ENCODE measurements at regions of chr12 and their contacts with region 1.

Region 1: DNA sequence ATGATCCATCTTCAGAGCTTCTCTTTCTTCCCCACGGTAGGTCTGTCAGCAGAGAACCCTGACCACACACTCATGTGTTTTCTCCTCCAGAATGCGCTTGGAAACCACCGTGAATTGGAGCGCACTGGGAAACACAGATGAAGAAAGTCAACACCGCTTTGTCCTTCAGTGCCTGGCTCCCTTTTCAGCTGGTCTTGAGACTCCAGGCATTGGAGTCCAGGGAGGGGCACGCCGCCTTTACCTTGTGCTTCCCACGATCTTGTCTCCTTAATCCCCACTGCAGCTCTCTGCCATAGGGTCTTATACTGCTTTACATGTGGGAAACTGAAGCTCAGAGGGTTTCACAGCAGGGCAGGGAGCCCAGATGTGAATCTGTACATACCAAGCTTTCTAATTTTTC is 1.1 kb downstream of the FAM90A1 start:
- DNase-seq: no peak
- ATAC-seq: no peak
- H3K4me3 ChIP-seq: no peak overlapping the region
- H3K4me3 Mint-ChIP-seq: no peak overlapping the region
- H3K27ac ChIP-seq: no peak overlapping the region
- H3K27ac Mint-ChIP-seq: no peak overlapping the region
- H3K4me1 ChIP-seq: no peaks in the 10 kb centered on the region
- H3K4me1 Mint-ChIP-seq: peaks cover 0 to 14% (median 0%) of the 10 kb centered on the region in 7 donors
- H3K27me3 ChIP-seq: no peaks in the 10 kb centered on the region
- H3K27me3 Mint-ChIP-seq: peaks cover 0 to 7% (median 5%) of the 10 kb centered on the region in 5 donors

Region 2: GRCh38 chr12:7832059-7832696 is 394.2 kb before region 1 on chr12:
- CTCF ChIA-PET with region 1: no interaction called
- POLR2A ChIA-PET with region 1: no interaction called
- intact Hi-C with region 1: loop called in 1 of 2 experiments (anchors 10 kb)
- DNase-seq: peak in 5 of 9 donors; percentile 8 to 34 (median 19)
- ATAC-seq: peak; percentile 91
- H3K4me3 ChIP-seq: no peak overlapping the region
- H3K4me3 Mint-ChIP-seq: no peak overlapping the region
- H3K27ac ChIP-seq: no peak overlapping the region
- H3K27ac Mint-ChIP-seq: no peak overlapping the region
- H3K4me1 ChIP-seq: no peaks in the 10 kb centered on the region
- H3K4me1 Mint-ChIP-seq: peaks cover 0 to 3% (median 0%) of the 10 kb centered on the region in 7 donors
- H3K27me3 ChIP-seq: no peaks in the 10 kb centered on the region
- H3K27me3 Mint-ChIP-seq: peaks cover 0 to 9% (median 0%) of the 10 kb centered on the region in 5 donors

Region 3: GRCh38 chr12:8081251-8081920 is 145.0 kb before region 1 on chr12:
- CTCF ChIA-PET with region 1: no interaction called
- POLR2A ChIA-PET with region 1: no interaction called
- intact Hi-C with region 1: no loop called
- DNase-seq: peak in 7 of 9 donors; percentile 14 to 43 (median 31)
- ATAC-seq: no peak
- H3K4me3 ChIP-seq: peak overlapping the region; percentile 91
- H3K4me3 Mint-ChIP-seq: peak overlapping the region; percentile 86 to 99 (median 95)
- H3K27ac ChIP-seq: peak overlapping the region; percentile 94
- H3K27ac Mint-ChIP-seq: peak overlapping the region; percentile 92 to 100 (median 98)
- H3K4me1 ChIP-seq: peaks cover 27 to 56% of the 10 kb centered on the region in 2 donors
- H3K4me1 Mint-ChIP-seq: peaks cover 34 to 92% (median 57%) of the 10 kb centered on the region in 7 donors
- H3K27me3 ChIP-seq: no peaks in the 10 kb centered on the region
- H3K27me3 Mint-ChIP-seq: no peaks in the 10 kb centered on the region

Region 4: GRCh38 chr12:8108808-8109398 is 117.5 kb before region 1 on chr12:
- CTCF ChIA-PET with region 1: interaction called, 9 read pairs
- POLR2A ChIA-PET with region 1: no interaction called
- intact Hi-C with region 1: loop called in 1 of 2 experiments (anchors 1 kb)
- DNase-seq: peak; percentile 47 to 84 (median 71)
- ATAC-seq: peak; percentile 99
- H3K4me3 ChIP-seq: no peak overlapping the region
- H3K4me3 Mint-ChIP-seq: no peak overlapping the region
- H3K27ac ChIP-seq: no peak overlapping the region
- H3K27ac Mint-ChIP-seq: peak overlapping the region in 3 of 9 donors; percentile 0 to 38 (median 22)
- H3K4me1 ChIP-seq: no peaks in the 10 kb centered on the region
- H3K4me1 Mint-ChIP-seq: peaks cover 0 to 6% (median 5%) of the 10 kb centered on the region in 7 donors
- H3K27me3 ChIP-seq: no peaks in the 10 kb centered on the region
- H3K27me3 Mint-ChIP-seq: no peaks in the 10 kb centered on the region